Caco-2 (cell line): ENCODE measurements at regions of chr10 and their contacts with region 1.

Region 1: DNA sequence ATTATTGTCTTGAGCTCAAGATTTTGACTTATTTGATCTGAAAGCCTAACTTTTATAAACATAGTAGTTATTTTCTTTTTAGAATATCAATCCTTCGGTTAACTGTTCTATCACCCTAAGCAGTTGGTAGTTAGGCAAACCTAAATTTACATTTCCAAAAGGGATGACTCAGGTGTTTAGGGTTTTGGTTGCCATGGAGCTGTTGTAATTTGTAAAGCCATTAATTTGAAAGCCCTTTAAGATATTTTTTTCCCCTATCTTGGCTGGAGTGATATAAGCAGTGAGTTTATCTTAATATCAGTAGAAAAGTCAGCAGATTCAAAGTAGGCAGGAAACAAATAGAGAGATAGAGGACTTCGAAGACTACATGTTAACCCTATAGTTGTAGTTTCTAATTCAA is 1472.6 kb upstream of the CELF2 start:
- DNase-seq: no peak
- H3K4me3 ChIP-seq: no peak overlapping the region
- H3K4me3 Mint-ChIP-seq: no peak overlapping the region
- H3K27ac Mint-ChIP-seq: no peak overlapping the region
- H3K4me1 ChIP-seq: no peaks in the 10 kb centered on the region
- H3K4me1 Mint-ChIP-seq: no peaks in the 10 kb centered on the region
- H3K27me3 ChIP-seq: no peaks in the 10 kb centered on the region
- H3K27me3 Mint-ChIP-seq: peaks cover 3% of the 10 kb centered on the region
- CTCF ChIP-seq: no peak

Region 2: DNA sequence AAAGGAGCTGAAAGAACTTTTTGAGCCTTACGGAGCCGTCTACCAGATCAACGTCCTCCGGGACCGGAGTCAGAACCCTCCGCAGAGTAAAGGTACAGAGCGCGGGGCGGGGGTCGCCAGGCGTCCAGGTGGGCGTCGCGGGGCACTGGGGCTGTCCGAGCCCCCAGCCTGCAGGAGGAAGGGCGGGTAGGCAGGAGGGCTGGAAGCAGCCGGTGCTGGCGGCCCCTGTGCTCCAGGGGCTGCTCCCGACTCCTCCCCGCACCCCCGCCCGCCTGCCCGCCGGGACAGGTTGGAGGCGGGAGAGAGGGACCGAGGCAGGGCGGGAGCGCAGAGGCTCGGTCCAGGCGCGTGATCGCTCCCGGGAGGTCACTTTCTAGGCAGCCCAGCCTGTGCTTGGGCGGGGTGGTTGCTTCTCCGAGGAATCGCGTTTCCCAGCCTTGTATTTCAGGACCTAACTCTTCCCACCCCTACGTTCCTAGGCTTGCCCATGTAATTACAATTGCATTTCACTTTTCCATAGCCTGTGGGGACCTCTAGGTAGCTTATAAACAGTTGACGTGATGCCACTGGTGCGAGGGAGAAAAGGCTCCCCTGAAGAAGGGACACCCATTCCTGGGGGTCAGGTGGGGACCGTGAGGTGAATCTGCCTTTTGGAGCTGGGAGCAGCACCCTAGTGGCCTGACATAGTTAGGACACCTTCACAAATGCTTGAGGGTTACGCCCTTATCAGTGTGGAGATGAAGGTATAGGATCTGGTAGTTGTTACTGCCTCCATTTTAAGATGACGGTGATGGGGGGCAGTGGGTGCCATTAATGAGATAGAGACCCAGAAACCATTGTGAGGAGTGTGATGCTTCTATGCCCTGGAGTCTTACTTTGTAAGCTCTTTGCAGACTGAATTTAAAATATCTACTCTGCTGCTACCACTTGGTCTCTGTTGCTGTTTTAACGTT is 1620.8 kb after region 1 on chr10:
- CTCF ChIA-PET with region 1: no interaction called
- POLR2A ChIA-PET with region 1: interaction called, 13 read pairs
- intact Hi-C with region 1: no loop called
- DNase-seq: no peak
- H3K4me3 ChIP-seq: no peak overlapping the region
- H3K4me3 Mint-ChIP-seq: no peak overlapping the region
- H3K27ac Mint-ChIP-seq: no peak overlapping the region
- H3K4me1 ChIP-seq: no peaks in the 10 kb centered on the region
- H3K4me1 Mint-ChIP-seq: no peaks in the 10 kb centered on the region
- H3K27me3 ChIP-seq: no peaks in the 10 kb centered on the region
- H3K27me3 Mint-ChIP-seq: peaks cover 27% of the 10 kb centered on the region
- CTCF ChIP-seq: peak in 1 of 2 experiments; percentile 30